ENCODE measurements at regions of chr10 and their contacts with region 1.

Region 1: GRCh38 chr10:79195091-79195923 is 126.5 kb downstream of the ZMIZ1 start:
- DNase-seq: peak; percentile 76 to 89
- H3K4me3 ChIP-seq: no peak overlapping the region
- H3K27ac ChIP-seq: no peak overlapping the region
- H3K4me1 ChIP-seq: peaks cover 33% of the 10 kb centered on the region
- H3K27me3 ChIP-seq: no peaks in the 10 kb centered on the region
- CTCF ChIP-seq: peak; percentile 99

Region 2: GRCh38 chr10:78211561-78212051 is 983.7 kb before region 1 on chr10:
- CTCF ChIA-PET with region 1: no interaction called
- POLR2A ChIA-PET with region 1: no interaction called
- intact Hi-C with region 1: loop called (anchors 1 kb)
- DNase-seq: peak in 1 of 2 experiments; percentile 41
- H3K4me3 ChIP-seq: no peak overlapping the region
- H3K27ac ChIP-seq: no peak overlapping the region
- H3K4me1 ChIP-seq: no peaks in the 10 kb centered on the region
- H3K27me3 ChIP-seq: peaks cover 32% of the 10 kb centered on the region
- CTCF ChIP-seq: peak; percentile 84

Region 3: GRCh38 chr10:78599081-78599853 is 596.0 kb before region 1 on chr10:
- CTCF ChIA-PET with region 1: no interaction called
- POLR2A ChIA-PET with region 1: no interaction called
- intact Hi-C with region 1: loop called (anchors 2 kb)
- DNase-seq: no peak
- H3K4me3 ChIP-seq: no peak overlapping the region
- H3K27ac ChIP-seq: no peak overlapping the region
- H3K4me1 ChIP-seq: no peaks in the 10 kb centered on the region
- H3K27me3 ChIP-seq: no peaks in the 10 kb centered on the region; the same call in 1 of the 2 replicates
- CTCF ChIP-seq: peak; percentile 34; the same call in 1 of the 2 replicates

Region 4: DNA sequence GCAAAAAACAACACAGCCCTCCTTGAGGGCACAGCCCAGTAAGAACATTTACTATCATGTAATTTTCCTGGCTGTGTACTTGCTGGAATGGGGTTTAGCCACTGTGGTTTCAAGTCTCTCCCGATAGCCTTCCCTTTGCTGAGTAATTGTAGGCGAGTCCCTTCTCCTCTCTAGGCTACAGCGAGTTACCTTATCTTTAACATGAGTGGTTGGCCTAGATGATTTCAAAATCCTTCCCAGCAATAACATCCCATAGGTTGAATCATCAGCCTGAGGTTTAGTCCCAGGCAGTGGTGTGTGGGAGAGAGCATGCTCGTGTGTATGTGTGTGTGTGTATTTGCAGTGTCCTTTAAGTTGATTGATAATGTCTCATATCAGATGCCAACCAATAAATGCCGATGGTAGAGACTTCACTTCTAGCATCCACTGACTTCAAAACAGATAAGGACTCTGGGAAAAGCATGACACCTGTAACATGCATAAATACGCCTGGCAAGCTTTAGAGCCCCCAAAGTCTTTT is 269.4 kb before region 1 on chr10:
- CTCF ChIA-PET with region 1: no interaction called
- POLR2A ChIA-PET with region 1: no interaction called
- intact Hi-C with region 1: loop called (anchors 2 kb)
- DNase-seq: peak; percentile 56 to 97
- H3K4me3 ChIP-seq: no peak overlapping the region
- H3K27ac ChIP-seq: peak overlapping the region; percentile 88
- H3K4me1 ChIP-seq: peaks cover 79% of the 10 kb centered on the region
- H3K27me3 ChIP-seq: no peaks in the 10 kb centered on the region
- CTCF ChIP-seq: no peak

Region 5: GRCh38 chr10:79149662-79150443 is 45.5 kb before region 1 on chr10:
- CTCF ChIA-PET with region 1: no interaction called
- POLR2A ChIA-PET with region 1: no interaction called
- intact Hi-C with region 1: loop called (anchors 1 kb)
- DNase-seq: peak; percentile 92 to 99
- H3K4me3 ChIP-seq: peak overlapping the region; percentile 29; the same call in 1 of the 2 replicates
- H3K27ac ChIP-seq: peak overlapping the region; percentile 90
- H3K4me1 ChIP-seq: peaks cover 62% of the 10 kb centered on the region
- H3K27me3 ChIP-seq: no peaks in the 10 kb centered on the region
- CTCF ChIP-seq: no peak

Measured in PC-9 (cell line).